ENCODE measurements at regions of chr20 and their contacts with region 1.

Region 1: GRCh38 chr20:58447511-58448391 is 58.7 kb downstream of the VAPB start:
- DNase-seq: peak; percentile 29

Region 2: DNA sequence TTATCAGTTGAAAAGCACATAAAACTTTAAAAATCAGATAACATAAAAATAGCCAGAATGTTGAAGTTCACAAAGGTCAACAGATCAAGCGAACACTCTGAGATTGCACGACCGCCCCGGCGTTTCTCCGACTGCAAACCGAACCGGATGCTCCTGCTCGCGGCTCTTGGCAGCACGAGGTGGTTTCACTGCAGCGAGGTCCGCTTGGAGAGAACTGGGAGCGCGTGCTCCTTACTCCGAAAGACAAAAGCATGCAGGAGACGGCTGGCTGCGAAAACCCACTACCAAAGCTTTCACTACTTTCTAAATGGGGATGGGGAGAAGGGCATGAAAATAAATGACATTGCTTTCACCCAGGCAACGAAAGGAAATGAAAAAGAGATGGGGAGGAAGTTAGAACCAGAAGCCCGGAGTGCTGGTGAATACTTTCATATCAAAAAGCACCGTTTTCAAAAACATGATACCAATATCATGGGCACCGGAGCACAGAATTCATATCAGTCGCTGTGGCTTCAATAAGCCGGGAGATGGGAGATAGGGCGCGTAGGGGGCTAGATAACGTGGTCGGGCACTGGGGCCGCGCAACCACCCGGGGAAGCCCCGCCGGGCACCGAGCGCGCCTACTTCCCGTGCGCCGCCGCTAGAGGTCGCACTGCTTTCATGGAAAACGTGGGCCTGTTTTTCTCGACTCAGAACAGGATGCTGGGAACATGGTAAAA is 211.0 kb before region 1 on chr20:
- in situ Hi-C with region 1: loop called (anchors 25 kb)
- DNase-seq: peak; percentile 69

Region 3: DNA sequence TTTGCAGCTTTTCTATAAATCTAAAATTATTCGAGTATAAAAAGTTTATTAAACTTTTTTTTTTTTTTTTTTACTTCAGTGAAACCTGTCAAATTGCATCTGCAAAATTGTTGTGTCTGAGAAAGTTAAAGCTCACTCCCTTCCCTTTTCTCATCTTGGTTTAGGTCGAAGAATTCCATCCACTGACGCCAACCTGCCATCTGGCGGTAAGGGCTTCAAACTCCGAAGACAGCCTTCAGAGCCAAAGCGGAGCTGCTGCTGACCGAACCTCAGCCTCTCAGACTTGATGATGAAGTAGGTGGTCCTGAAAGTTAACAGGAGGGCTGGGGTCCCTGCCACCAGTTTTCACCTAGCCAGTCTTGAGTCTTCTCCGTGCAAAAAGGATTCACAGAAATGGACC is 88.3 kb before region 1 on chr20:
- in situ Hi-C with region 1: no loop called
- DNase-seq: no peak

Region 4: DNA sequence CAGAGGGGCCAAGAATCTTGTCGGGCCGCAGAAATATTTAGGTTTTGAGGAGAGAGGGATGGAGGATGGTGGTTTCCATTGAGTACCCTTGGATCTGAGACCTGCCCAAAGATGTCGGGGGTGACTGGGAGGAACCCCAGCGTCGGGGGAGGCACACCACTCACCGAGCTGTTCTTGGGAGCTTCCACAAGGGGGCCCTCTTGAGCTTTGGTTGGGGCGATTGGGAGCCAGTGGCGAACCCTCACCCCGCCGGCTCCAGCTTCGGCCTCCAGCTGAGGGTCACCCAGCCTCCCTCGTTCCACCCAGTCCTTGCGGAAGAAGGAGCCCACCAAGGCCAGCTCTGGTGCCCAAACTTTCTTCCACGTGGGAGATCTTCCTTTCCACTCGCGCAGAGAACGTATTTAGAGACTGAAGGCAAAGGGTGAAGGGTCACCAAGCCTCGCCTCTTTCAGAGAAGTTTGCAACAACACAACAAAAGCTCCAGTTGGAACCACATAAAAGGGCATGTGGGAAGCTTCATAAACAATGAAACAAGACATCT is 33.8 kb after region 1 on chr20:
- in situ Hi-C with region 1: no loop called
- DNase-seq: no peak

Measured in G401 (cell line).